CD4-positive, alpha-beta T cell (primary cell): ENCODE measurements at regions of chr19 and their contacts with region 1.

Region 1: DNA sequence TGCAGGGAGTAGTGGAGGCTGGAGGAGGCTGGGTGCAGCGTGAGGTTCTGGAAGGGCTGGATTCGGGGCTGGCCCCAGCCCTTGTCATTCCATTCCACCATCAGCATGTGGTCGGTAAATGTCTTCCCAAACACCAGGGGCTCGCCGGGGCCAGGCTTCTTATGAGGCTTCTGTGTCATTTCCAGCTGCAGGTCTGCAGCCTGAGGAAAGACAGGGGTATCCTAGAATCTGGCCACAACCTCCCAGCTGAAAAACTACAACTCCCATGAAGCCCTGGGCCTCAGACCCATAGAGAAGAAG is 4.4 kb downstream of the BCAT2 start:
- DNase-seq: peak in 7 of 14 experiments; percentile 23 to 61 (median 27)
- ATAC-seq: peak; percentile 71
- H3K4me3 ChIP-seq: no peak overlapping the region
- H3K4me3 Mint-ChIP-seq: peak overlapping the region; percentile 80
- H3K27ac ChIP-seq: no peak overlapping the region
- H3K27ac Mint-ChIP-seq: no peak overlapping the region
- H3K4me1 ChIP-seq: peaks cover 24% of the 10 kb centered on the region
- H3K4me1 Mint-ChIP-seq: peaks cover 23% of the 10 kb centered on the region
- H3K27me3 ChIP-seq: no peaks in the 10 kb centered on the region
- H3K27me3 Mint-ChIP-seq: no peaks in the 10 kb centered on the region
- CTCF ChIP-seq: no peak

Region 2: DNA sequence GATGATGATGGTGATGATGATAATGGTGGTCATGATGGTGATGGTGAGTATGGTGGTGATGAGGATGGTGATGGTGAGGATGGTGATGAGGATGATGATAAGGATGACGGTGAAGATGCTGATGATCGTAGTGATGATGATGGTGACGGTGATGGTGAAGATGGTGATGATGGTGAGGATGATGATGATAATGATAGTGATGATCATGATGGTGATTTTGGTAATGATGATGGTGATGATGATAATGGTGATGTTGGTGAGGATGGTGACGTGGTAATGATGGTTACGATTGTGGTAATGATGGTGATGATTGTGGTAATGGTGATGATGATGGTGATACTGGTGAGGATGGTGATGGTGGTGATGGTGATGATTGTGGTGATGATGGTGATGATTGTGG is 15.2 kb after region 1 on chr19:
- CTCF ChIA-PET with region 1: no interaction called
- POLR2A ChIA-PET with region 1: no interaction called
- intact Hi-C with region 1: loop called in 1 of 2 experiments (anchors 1 kb)
- DNase-seq: no peak
- ATAC-seq: no peak
- H3K4me3 ChIP-seq: no peak overlapping the region
- H3K4me3 Mint-ChIP-seq: no peak overlapping the region
- H3K27ac ChIP-seq: no peak overlapping the region
- H3K27ac Mint-ChIP-seq: no peak overlapping the region
- H3K4me1 ChIP-seq: no peaks in the 10 kb centered on the region
- H3K4me1 Mint-ChIP-seq: no peaks in the 10 kb centered on the region
- H3K27me3 ChIP-seq: no peaks in the 10 kb centered on the region
- H3K27me3 Mint-ChIP-seq: no peaks in the 10 kb centered on the region
- CTCF ChIP-seq: no peak